ENCODE measurements at regions of chr17 and their contacts with region 1.

Region 1: DNA sequence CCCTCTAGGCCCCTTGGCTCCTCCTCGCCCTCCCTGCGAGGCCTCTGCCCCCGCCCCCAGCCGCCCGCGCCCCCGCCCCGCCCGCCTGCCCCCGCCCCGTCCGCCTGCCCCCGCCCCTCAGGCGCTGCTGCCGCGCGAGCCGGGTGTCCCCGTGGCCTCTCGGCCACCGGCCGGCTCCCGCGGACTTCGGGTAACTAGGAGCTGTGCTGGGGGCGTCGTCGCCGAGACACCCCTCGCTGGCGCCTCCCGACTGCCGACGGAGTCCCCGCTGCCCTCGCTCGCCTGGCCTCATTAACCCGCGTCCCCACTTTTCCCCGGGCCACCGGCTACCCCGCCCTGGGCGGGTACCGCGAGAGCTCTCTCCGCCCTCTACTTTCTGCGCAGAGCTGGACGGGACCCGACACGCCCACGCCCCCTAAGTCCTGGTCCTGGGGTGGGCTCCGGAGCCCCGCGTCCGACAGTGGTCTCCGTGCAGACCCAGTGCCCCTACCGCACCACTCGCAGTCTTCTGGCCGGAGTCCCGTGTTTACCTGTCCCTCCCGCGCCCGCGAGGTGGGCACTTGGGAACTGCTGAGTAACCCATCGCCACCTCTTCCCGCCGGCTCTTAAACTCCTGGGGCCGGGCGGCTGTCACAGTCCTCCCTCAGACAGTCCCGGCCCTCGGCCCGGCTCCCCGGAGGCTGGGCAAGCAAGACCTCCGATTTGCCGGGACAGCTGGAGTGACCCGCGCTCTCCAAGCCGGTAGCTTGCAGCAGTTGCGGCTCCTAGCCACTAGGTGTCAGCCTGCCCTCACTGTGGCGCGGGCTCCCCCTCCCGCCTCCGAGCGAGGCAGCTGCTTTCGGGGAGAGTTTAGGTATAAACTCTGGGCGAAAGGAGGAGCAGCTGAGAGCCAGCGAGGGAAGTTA is at the start of gene TLCD1:
- DNase-seq: peak; percentile 82 to 98
- H3K4me3 ChIP-seq: peak within 1 kb of the TSS; percentile 57
- H3K4me3 Mint-ChIP-seq: peak within 1 kb of the TSS; percentile 92
- H3K27ac Mint-ChIP-seq: peak within 1 kb of the TSS; percentile 96
- H3K4me1 ChIP-seq: peaks cover 23% of the 10 kb centered on the region
- H3K4me1 Mint-ChIP-seq: peaks cover 38% of the 10 kb centered on the region
- H3K27me3 ChIP-seq: no peaks in the 10 kb centered on the region
- H3K27me3 Mint-ChIP-seq: no peaks in the 10 kb centered on the region
- CTCF ChIP-seq: peak; percentile 98 to 99
- total RNA-seq, gene TLCD1: 31.7 and 37.9 TPM in 2 replicates

Region 2: DNA sequence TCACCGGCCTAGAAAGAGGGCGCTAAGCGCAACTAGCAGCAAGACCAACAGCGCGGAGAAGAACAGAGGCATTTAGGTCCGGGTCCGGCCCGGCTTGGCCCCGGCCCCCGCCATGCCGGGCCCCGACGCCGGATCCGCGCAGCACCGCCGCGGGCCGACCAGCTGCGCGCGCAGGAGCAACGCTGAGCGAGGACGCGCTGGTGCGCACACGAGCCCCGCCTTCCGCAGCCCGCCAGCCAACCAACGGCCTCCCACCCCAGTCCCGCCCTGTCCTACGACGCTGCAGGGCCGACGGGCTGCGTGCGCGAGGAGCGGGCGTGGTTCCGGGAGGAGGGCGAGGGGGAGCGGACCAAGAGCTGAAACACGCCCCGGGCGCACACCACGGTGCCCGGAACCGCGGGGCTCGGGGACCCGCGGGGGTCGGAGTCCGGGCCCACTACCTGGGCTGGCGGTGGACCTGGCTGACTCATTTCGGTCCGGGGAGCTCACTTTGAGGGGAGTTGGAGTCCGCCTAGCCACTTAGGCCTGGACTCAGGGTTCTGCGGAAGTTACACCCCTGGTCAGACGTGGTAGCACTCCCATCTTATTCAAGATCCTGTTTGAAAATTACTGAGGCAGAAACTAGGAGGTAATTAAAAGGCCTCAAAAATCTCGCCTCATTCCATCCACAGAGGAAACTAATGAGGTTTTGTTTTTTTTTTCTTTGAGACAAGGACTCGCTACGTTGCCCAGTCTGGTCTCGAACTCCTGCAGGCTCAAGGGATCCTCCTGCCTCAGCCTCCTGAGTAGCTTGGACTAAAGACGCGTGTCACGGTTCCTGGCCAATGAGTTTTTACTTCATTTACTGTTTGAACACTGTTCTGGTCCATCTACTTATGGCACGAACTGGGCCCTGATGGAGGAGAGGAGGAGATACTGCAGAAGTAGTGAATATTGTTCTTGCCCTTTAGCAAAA is 81.2 kb before region 1 on chr17 and contains the start of gene BLTP2:
- CTCF ChIA-PET with region 1: interaction called, 15 read pairs
- POLR2A ChIA-PET with region 1: interaction called, 7 read pairs
- intact Hi-C with region 1: loop called (anchors 2 kb)
- DNase-seq: peak; percentile 96
- H3K4me3 ChIP-seq: peak within 1 kb of the TSS; percentile 69
- H3K4me3 Mint-ChIP-seq: peak within 1 kb of the TSS; percentile 94
- H3K27ac Mint-ChIP-seq: peak within 1 kb of the TSS; percentile 85
- H3K4me1 ChIP-seq: peaks cover 23% of the 10 kb centered on the region
- H3K4me1 Mint-ChIP-seq: peaks cover 26% of the 10 kb centered on the region
- H3K27me3 ChIP-seq: no peaks in the 10 kb centered on the region
- H3K27me3 Mint-ChIP-seq: no peaks in the 10 kb centered on the region
- CTCF ChIP-seq: no peak
- total RNA-seq, gene BLTP2: 154 and 176 TPM in 2 replicates

Region 3: DNA sequence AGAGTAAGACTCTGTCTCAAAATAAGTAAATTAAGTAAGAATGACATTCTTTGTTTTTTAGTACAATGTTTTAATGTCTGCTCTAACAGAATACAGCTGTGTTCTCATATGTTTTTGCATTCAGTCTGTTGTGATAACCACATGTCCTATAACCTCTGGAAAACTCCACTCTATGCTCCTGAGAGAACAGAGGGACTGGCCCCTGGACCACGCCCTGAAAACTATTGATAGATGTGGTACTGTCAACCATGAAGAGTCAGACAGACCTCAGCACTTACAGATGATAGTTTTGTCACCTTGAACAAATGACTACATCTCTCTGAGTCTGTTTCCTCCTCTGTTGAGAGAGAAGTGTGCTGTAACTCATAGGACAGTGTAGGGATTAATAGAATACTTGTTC is 56.6 kb before region 1 on chr17:
- CTCF ChIA-PET with region 1: no interaction called
- POLR2A ChIA-PET with region 1: no interaction called
- intact Hi-C with region 1: no loop called
- DNase-seq: no peak
- H3K4me3 ChIP-seq: no peak overlapping the region
- H3K4me3 Mint-ChIP-seq: no peak overlapping the region
- H3K27ac Mint-ChIP-seq: no peak overlapping the region
- H3K4me1 ChIP-seq: no peaks in the 10 kb centered on the region
- H3K4me1 Mint-ChIP-seq: peaks cover 4% of the 10 kb centered on the region
- H3K27me3 ChIP-seq: no peaks in the 10 kb centered on the region
- H3K27me3 Mint-ChIP-seq: no peaks in the 10 kb centered on the region
- CTCF ChIP-seq: no peak

Region 4: GRCh38 chr17:28698253-28698941 is 28.1 kb before region 1 on chr17:
- CTCF ChIA-PET with region 1: interaction called, 4 read pairs
- POLR2A ChIA-PET with region 1: interaction called, 7 read pairs
- intact Hi-C with region 1: loop called (anchors 1 kb)
- DNase-seq: peak; percentile 94 to 95
- H3K4me3 ChIP-seq: no peak overlapping the region
- H3K4me3 Mint-ChIP-seq: peak overlapping the region; percentile 52
- H3K27ac Mint-ChIP-seq: peak overlapping the region; percentile 87
- H3K4me1 ChIP-seq: peaks cover 31% of the 10 kb centered on the region
- H3K4me1 Mint-ChIP-seq: peaks cover 26% of the 10 kb centered on the region
- H3K27me3 ChIP-seq: no peaks in the 10 kb centered on the region
- H3K27me3 Mint-ChIP-seq: no peaks in the 10 kb centered on the region
- CTCF ChIP-seq: peak in 1 of 2 experiments; percentile 14

Region 5: DNA sequence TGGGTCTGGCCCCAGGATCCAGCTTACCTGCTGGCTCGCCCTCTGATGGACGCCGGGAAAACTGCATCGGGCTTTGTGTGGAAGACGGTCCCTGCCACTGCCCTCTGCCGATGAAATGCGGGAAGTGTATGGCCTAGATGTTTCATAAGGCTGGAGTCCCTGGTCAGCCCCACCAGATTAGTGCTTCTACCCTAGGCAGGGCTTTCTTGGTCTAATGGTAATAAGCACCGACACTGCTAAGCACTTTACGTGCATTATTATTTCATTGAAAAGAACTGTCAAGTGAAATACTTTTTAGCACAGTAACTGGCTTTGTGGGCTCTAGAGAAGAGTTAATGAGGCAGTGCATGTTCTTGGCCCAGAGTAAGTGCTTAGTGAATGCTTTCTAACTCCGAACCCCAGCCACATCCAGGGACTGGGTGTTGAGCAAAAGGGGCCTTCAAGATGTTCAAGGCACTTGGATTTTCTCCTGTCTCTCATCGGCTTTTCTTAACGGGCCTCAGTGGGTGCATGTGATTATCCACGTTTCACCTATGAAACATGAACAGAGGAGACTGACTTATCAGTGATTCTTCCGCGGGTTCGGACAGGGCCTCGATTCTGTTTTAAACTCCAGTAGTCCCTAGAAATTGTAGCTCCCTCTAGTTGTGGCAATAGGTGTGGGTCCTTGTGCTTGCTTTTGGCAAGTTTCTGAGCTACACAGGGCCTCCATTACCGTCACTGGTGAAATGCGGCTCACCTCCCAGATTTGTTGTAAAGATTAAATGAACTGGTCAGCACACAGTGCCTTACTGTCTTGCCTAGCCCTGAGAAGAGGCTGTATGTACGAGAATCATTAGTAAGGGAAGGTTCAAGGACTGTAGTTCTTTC is 23.9 kb after region 1 on chr17:
- CTCF ChIA-PET with region 1: interaction called, 324 read pairs
- POLR2A ChIA-PET with region 1: interaction called, 165 read pairs
- intact Hi-C with region 1: loop called (anchors 1 kb)
- DNase-seq: peak; percentile 95 to 96
- H3K4me3 ChIP-seq: no peak overlapping the region
- H3K4me3 Mint-ChIP-seq: no peak overlapping the region
- H3K27ac Mint-ChIP-seq: no peak overlapping the region
- H3K4me1 ChIP-seq: peaks cover 28% of the 10 kb centered on the region
- H3K4me1 Mint-ChIP-seq: peaks cover 12% of the 10 kb centered on the region
- H3K27me3 ChIP-seq: no peaks in the 10 kb centered on the region
- H3K27me3 Mint-ChIP-seq: no peaks in the 10 kb centered on the region
- CTCF ChIP-seq: peak; percentile 99 to 100

Region 6: GRCh38 chr17:28878981-28879380 is 152.5 kb after region 1 on chr17:
- CTCF ChIA-PET with region 1: interaction called, 30 read pairs
- POLR2A ChIA-PET with region 1: no interaction called
- intact Hi-C with region 1: loop called (anchors 1 kb)
- DNase-seq: peak; percentile 79 to 82
- H3K4me3 ChIP-seq: no peak overlapping the region
- H3K4me3 Mint-ChIP-seq: no peak overlapping the region
- H3K27ac Mint-ChIP-seq: peak overlapping the region; percentile 30
- H3K4me1 ChIP-seq: 0 out of 2 replicates have a peak, but pooled peaks cover 6% of the 10 kb centered on the region
- H3K4me1 Mint-ChIP-seq: peaks cover 16% of the 10 kb centered on the region
- H3K27me3 ChIP-seq: no peaks in the 10 kb centered on the region
- H3K27me3 Mint-ChIP-seq: no peaks in the 10 kb centered on the region
- CTCF ChIP-seq: peak; percentile 73 to 85

Region 7: DNA sequence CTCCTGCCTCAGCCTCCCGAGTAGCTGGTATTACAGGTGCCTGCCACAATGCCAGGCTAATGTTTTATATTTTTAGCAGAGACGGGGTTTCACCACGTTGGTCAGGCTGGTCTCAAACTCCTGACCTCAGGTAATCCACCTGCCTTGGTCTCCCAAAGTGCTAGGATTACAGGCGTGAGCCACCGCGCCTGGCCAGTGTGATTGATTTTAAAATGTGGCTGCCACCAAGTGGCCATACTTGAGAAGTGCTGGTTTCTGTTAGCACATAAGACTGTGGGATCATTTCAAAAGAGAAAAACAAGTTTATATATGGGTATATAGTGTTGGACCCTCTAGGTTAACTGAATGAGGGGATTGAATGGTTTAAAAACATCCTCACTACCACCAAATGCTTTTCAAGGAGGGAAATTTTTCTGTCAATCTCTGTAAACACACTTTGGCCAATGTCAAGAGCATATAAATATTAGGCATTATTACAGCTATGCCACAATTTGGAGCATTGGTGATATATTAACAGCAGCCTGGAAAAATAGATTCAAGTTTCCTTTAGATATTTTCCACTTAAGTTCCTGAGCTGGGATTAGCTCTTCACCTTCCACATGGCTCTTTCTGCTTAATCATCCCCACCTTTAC is 189.9 kb after region 1 on chr17:
- CTCF ChIA-PET with region 1: interaction called, 3 read pairs
- POLR2A ChIA-PET with region 1: no interaction called
- intact Hi-C with region 1: loop called (anchors 1 kb)
- DNase-seq: peak in 1 of 2 experiments; percentile 54
- H3K4me3 ChIP-seq: no peak overlapping the region
- H3K4me3 Mint-ChIP-seq: no peak overlapping the region
- H3K27ac Mint-ChIP-seq: no peak overlapping the region
- H3K4me1 ChIP-seq: no peaks in the 10 kb centered on the region
- H3K4me1 Mint-ChIP-seq: no peaks in the 10 kb centered on the region
- H3K27me3 ChIP-seq: no peaks in the 10 kb centered on the region
- H3K27me3 Mint-ChIP-seq: no peaks in the 10 kb centered on the region
- CTCF ChIP-seq: peak; percentile 60 to 66